Activated naive CD4-positive, alpha-beta T cell treated with anti-CD3 and anti-CD28 coated beads, Interleukin-2, amount 10 ng/mL, durations not matched to agents 7 days and 5 days (primary cell): ENCODE measurements at regions of chr12 and their contacts with region 1.

Region 1: GRCh38 chr12:52278541-52279421 is 4.3 kb downstream of the KRT86 start:
- DNase-seq: peak; percentile 80
- H3K4me3 Mint-ChIP-seq: no peak overlapping the region
- H3K27ac Mint-ChIP-seq: no peak overlapping the region
- H3K4me1 Mint-ChIP-seq: peaks cover 9% of the 10 kb centered on the region
- H3K27me3 Mint-ChIP-seq: peaks cover 77% of the 10 kb centered on the region

Region 2: DNA sequence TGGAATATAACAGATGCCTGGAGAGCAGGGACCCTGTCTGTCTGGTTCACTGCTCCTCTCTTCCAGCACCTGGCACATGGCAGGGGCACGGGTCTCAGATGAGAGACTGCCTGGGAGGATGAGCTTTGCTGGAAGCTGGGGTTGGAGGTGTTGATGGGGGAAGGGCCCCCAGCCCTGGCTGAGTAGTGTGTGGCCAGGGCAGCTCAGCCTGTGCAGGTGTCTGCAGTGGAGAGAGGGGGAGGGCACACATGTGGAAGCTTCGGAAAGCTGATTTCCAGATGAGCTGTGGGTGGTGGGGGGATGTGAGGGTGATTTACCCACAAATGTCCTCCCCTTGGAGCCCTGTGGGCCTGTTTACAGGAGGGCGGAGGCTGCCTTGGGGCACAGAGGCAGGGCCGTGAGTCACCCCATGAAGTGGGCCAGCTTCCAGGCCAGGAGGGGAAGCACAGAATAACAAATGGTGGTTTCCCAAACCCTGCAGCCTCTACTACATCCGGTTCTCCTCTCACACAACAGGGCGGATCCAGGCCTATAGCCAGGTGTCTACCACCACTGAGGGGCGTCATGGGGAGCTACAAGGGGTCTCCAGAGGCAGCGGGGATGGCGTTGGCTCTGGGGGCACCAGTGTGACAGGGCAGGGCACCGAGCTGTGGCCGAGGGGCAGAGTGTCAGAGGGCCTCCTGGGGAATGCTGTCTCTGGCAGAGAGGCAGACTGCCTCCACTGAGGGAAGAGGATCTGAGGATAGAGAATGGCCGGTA is 34.7 kb before region 1 on chr12:
- CTCF ChIA-PET with region 1: interaction called, 16 read pairs
- DNase-seq: peak; percentile 77
- H3K4me3 Mint-ChIP-seq: peak overlapping the region; percentile 43
- H3K27ac Mint-ChIP-seq: peak overlapping the region; percentile 91
- H3K4me1 Mint-ChIP-seq: peaks cover 56% of the 10 kb centered on the region
- H3K27me3 Mint-ChIP-seq: peaks cover 29% of the 10 kb centered on the region

Region 3: GRCh38 chr12:52258335-52258901 is 20.4 kb before region 1 on chr12:
- CTCF ChIA-PET with region 1: interaction called, 76 read pairs
- DNase-seq: peak; percentile 27
- H3K4me3 Mint-ChIP-seq: no peak overlapping the region
- H3K27ac Mint-ChIP-seq: no peak overlapping the region
- H3K4me1 Mint-ChIP-seq: peaks cover 36% of the 10 kb centered on the region
- H3K27me3 Mint-ChIP-seq: peaks cover 95% of the 10 kb centered on the region